Naive thymus-derived CD4-positive, alpha-beta T cell (primary cell): ENCODE measurements at regions of chr16 and their contacts with region 1.

Region 1: GRCh38 chr16:57462209-57462977 is at the start of gene POLR2C:
- DNase-seq: peak; percentile 84 to 96 (median 92)
- ATAC-seq: peak; percentile 99
- H3K4me3 ChIP-seq: peak within 1 kb of the TSS; percentile 86
- H3K4me3 Mint-ChIP-seq: peak within 1 kb of the TSS; percentile 79 to 100 (median 98)
- H3K27ac ChIP-seq: peak within 1 kb of the TSS; percentile 77
- H3K27ac Mint-ChIP-seq: peak within 1 kb of the TSS; percentile 93 to 100 (median 99)
- H3K4me1 ChIP-seq: peaks cover 17 to 23% of the 10 kb centered on the region in 2 donors
- H3K4me1 Mint-ChIP-seq: peaks cover 19 to 45% (median 35%) of the 10 kb centered on the region in 7 donors
- H3K27me3 ChIP-seq: no peaks in the 10 kb centered on the region
- H3K27me3 Mint-ChIP-seq: no peaks in the 10 kb centered on the region
- total RNA-seq, gene POLR2C: 63.4 to 96.3 (median 81.4) TPM

Region 2: DNA sequence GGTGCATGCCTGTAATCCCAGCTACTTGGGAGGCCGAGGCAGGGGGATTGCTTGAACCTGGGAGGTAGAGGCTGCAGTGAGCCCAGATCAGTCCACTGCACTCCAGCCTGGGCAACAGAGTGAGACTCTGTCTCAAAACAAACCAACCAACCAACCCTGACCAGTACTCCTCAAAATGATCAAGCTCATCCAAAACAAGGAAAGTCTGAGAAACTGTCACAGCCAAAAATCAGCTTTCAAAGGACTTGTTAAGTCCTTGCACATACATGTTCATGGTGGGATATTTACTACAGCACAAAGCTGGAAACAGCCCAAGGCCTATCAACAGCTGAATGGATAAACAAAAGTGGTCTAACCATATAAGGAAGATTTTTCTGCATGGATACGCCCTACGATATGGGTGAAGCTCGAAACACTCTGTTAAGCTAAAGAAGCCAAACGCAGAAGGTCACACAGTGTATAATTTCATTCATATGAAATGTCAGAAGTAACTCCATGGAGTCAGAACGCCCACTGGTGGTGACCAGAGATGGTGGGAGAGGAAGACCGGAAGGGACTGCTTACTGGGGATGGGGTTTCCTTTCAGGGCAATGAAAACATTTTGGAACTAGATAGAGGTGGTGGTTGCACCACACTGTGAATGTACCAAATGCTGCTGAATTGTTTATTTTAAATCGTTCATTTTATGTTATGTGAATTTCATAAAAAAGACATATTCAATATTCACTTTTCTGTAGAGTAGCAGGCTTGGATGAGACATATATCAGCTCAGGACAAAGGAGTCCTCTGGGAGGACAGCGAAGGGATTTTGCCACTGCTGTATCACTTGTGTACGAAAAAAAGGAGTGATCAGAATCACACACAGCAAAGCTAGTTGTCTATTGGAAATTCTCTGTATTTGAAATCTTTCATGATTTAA is 40.1 kb before region 1 on chr16:
- CTCF ChIA-PET with region 1: interaction called, 3 read pairs
- POLR2A ChIA-PET with region 1: interaction called, 3 read pairs
- intact Hi-C with region 1: loop called in 1 of 2 experiments (anchors 1 kb)
- DNase-seq: no peak
- ATAC-seq: no peak
- H3K4me3 ChIP-seq: no peak overlapping the region
- H3K4me3 Mint-ChIP-seq: no peak overlapping the region
- H3K27ac ChIP-seq: no peak overlapping the region
- H3K27ac Mint-ChIP-seq: peak overlapping the region in 1 of 9 donors; percentile 48
- H3K4me1 ChIP-seq: peaks cover 9 to 10% of the 10 kb centered on the region in 2 donors
- H3K4me1 Mint-ChIP-seq: peaks cover 11 to 29% (median 24%) of the 10 kb centered on the region in 7 donors
- H3K27me3 ChIP-seq: no peaks in the 10 kb centered on the region
- H3K27me3 Mint-ChIP-seq: no peaks in the 10 kb centered on the region

Region 3: GRCh38 chr16:57485916-57486857 is 23.8 kb after region 1 on chr16 and contains the start of gene DOK4:
- CTCF ChIA-PET with region 1: no interaction called
- POLR2A ChIA-PET with region 1: interaction called, 7 read pairs
- intact Hi-C with region 1: loop called in 1 of 2 experiments (anchors 1 kb)
- DNase-seq: peak; percentile 47 to 87 (median 65)
- ATAC-seq: peak; percentile 97
- H3K4me3 ChIP-seq: peak within 1 kb of the TSS; percentile 59
- H3K4me3 Mint-ChIP-seq: peak within 1 kb of the TSS; percentile 82 to 97 (median 87)
- H3K27ac ChIP-seq: peak within 1 kb of the TSS; percentile 64
- H3K27ac Mint-ChIP-seq: peak within 1 kb of the TSS in 8 of 9 donors; percentile 36 to 86 (median 54)
- H3K4me1 ChIP-seq: peaks cover 9 to 17% of the 10 kb centered on the region in 2 donors
- H3K4me1 Mint-ChIP-seq: peaks cover 11 to 30% (median 19%) of the 10 kb centered on the region in 7 donors
- H3K27me3 ChIP-seq: no peaks in the 10 kb centered on the region
- H3K27me3 Mint-ChIP-seq: peaks cover 0 to 19% (median 0%) of the 10 kb centered on the region in 5 donors
- total RNA-seq, gene DOK4: 2.2 to 4.0 (median 2.9) TPM

Region 4: DNA sequence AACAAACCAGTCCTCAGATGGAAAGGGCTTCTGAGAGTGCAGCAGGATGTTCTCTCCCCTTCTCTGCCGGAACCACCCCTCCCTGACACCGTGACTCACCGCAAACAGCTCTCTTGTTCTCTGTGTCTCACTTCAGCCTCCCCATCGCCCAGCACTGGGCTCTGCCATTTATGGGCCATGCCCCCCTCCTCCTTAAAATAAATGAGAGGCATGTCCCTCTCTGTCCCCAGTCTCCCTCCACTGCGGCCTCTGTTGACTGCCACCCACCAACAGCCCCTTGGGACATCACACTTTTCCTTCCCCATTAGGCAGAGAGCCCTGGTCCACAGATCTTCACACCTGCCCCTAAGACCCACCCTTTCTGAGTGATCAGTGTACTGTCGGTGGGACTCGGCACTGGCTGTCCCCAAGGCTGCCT is 67.7 kb after region 1 on chr16:
- CTCF ChIA-PET with region 1: no interaction called
- POLR2A ChIA-PET with region 1: interaction called, 11 read pairs
- intact Hi-C with region 1: no loop called
- DNase-seq: peak in 8 of 9 donors; percentile 56 to 83 (median 68)
- ATAC-seq: peak; percentile 91
- H3K4me3 ChIP-seq: peak overlapping the region; percentile 45
- H3K4me3 Mint-ChIP-seq: peak overlapping the region; percentile 61 to 88 (median 83)
- H3K27ac ChIP-seq: peak overlapping the region; percentile 87
- H3K27ac Mint-ChIP-seq: peak overlapping the region; percentile 85 to 99 (median 96)
- H3K4me1 ChIP-seq: peaks cover 41 to 54% of the 10 kb centered on the region in 2 donors
- H3K4me1 Mint-ChIP-seq: peaks cover 49 to 61% (median 59%) of the 10 kb centered on the region in 7 donors
- H3K27me3 ChIP-seq: no peaks in the 10 kb centered on the region
- H3K27me3 Mint-ChIP-seq: no peaks in the 10 kb centered on the region